ENCODE measurements at regions of chr22 and their contacts with region 1.

Region 1: GRCh38 chr22:46563381-46564083 is 26.1 kb upstream of the CELSR1 start:
- DNase-seq: peak; percentile 85
- H3K4me3 ChIP-seq: no peak overlapping the region; a peak in 1 of 4 replicates
- H3K27ac ChIP-seq: 0 out of 4 replicates have a peak overlapping the region, but pooled peaks of 1 of the 2 experiments have one; percentile 8
- H3K4me1 ChIP-seq: peaks cover 0 to 12% of the 10 kb centered on the region in 2 experiments; a peak in 1 of 4 replicates
- H3K27me3 ChIP-seq: no peaks in the 10 kb centered on the region
- CTCF ChIP-seq: peak; percentile 70
- EP300 ChIP-seq: no peak
- RAD21 ChIP-seq: peak; percentile 84

Region 2: GRCh38 chr22:46346680-46347405 is 216.7 kb before region 1 on chr22:
- CTCF ChIA-PET with region 1: no interaction called
- POLR2A ChIA-PET with region 1: no interaction called
- DNase-seq: no peak
- H3K4me3 ChIP-seq: no peak overlapping the region
- H3K27ac ChIP-seq: no peak overlapping the region
- H3K4me1 ChIP-seq: no peaks in the 10 kb centered on the region
- H3K27me3 ChIP-seq: no peaks in the 10 kb centered on the region
- CTCF ChIP-seq: no peak
- EP300 ChIP-seq: no peak
- RAD21 ChIP-seq: no peak

Region 3: GRCh38 chr22:46547883-46548244 is 15.7 kb before region 1 on chr22:
- CTCF ChIA-PET with region 1: interaction called, 48 read pairs
- POLR2A ChIA-PET with region 1: no interaction called
- DNase-seq: no peak
- H3K4me3 ChIP-seq: no peak overlapping the region
- H3K27ac ChIP-seq: peak overlapping the region; percentile 76 to 79; a peak in 3 of 4 replicates
- H3K4me1 ChIP-seq: peaks cover 16 to 28% of the 10 kb centered on the region in 2 experiments; a peak in 3 of 4 replicates
- H3K27me3 ChIP-seq: no peaks in the 10 kb centered on the region
- CTCF ChIP-seq: no peak
- EP300 ChIP-seq: no peak
- RAD21 ChIP-seq: no peak

Region 4: DNA sequence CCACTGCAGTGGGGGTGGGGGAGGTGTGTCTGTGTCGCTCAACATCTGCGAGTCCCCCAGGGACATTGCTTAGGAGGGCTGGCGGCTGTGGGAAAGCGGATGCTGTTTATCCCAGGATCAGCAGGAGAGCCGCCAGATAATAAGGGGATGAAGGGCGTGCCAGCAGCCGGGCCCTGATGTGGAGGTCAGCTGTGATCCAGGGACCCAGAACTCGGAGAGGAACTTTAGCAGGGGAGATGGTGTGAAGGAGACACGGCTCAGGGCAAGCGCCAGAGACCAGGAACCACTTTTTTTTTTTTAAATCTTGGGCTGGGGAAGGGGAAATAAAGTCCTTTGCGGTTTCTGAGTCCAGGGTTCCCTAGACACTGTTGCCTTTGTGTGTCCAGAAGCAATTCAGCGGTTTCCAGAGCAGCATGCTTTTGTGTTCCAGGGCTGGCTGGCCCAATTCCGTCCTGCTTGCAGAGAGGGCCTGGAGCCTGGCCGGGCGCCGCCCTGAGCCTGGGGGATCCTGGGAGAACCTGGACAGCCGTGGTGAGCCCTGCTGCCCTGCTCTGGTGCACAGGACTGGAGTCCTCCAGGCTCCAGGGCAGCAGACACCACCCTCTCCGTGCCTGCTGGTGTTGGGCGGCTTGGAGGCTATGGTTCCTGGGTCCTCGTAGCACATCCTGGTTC is 56.4 kb after region 1 on chr22 and contains the start of gene GRAMD4:
- CTCF ChIA-PET with region 1: interaction called, 28 read pairs
- POLR2A ChIA-PET with region 1: interaction called, 3 read pairs
- DNase-seq: peak; percentile 95
- H3K4me3 ChIP-seq: no peak within 1 kb of the TSS
- H3K27ac ChIP-seq: peak within 1 kb of the TSS in 1 of 2 experiments; percentile 96; a peak in 2 of 4 replicates
- H3K4me1 ChIP-seq: peaks cover 0 to 54% of the 10 kb centered on the region in 2 experiments; a peak in 1 of 4 replicates
- H3K27me3 ChIP-seq: no peaks in the 10 kb centered on the region
- CTCF ChIP-seq: no peak
- EP300 ChIP-seq: peak in 1 of 2 experiments; percentile 83; a peak in 2 of 4 replicates
- RAD21 ChIP-seq: no peak
- polyA plus RNA-seq, gene GRAMD4: 13.5 and 15.5 TPM in 2 replicates

Region 5: DNA sequence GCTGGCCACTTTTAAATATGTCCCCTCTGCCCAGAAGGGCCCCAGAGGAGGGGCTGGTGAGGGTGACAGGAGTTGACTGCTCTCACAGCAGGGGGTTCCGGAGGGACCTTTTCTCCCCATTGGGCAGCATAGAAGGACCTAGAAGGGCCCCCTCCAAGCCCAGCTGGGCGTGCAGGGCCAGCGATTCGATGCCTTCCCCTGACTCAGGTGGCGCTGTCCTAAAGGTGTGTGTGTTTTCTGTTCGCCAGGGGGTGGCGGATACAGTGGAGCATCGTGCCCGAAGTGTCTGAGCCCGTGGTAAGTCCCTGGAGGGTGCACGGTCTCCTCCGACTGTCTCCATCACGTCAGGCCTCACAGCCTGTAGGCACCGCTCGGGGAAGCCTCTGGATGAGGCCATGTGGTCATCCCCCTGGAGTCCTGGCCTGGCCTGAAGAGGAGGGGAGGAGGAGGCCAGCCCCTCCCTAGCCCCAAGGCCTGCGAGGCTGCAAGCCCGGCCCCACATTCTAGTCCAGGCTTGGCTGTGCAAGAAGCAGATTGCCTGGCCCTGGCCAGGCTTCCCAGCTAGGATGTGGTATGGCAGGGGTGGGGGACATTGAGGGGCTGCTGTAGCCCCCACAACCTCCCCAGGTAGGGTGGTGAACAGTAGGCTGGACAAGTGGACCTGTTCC is 103.2 kb after region 1 on chr22:
- CTCF ChIA-PET with region 1: interaction called, 76 read pairs
- POLR2A ChIA-PET with region 1: interaction called, 3 read pairs
- DNase-seq: no peak
- H3K4me3 ChIP-seq: no peak overlapping the region
- H3K27ac ChIP-seq: no peak overlapping the region
- H3K4me1 ChIP-seq: peaks cover 0 to 22% of the 10 kb centered on the region in 2 experiments; a peak in 2 of 4 replicates
- H3K27me3 ChIP-seq: no peaks in the 10 kb centered on the region
- CTCF ChIP-seq: no peak
- EP300 ChIP-seq: no peak
- RAD21 ChIP-seq: no peak

Region 6: GRCh38 chr22:46701262-46701661 is 137.7 kb after region 1 on chr22:
- CTCF ChIA-PET with region 1: interaction called, 11 read pairs
- POLR2A ChIA-PET with region 1: no interaction called
- DNase-seq: peak; percentile 17
- H3K4me3 ChIP-seq: no peak overlapping the region
- H3K27ac ChIP-seq: no peak overlapping the region
- H3K4me1 ChIP-seq: no peaks in the 10 kb centered on the region
- H3K27me3 ChIP-seq: no peaks in the 10 kb centered on the region
- CTCF ChIP-seq: no peak
- EP300 ChIP-seq: no peak
- RAD21 ChIP-seq: no peak

Region 7: DNA sequence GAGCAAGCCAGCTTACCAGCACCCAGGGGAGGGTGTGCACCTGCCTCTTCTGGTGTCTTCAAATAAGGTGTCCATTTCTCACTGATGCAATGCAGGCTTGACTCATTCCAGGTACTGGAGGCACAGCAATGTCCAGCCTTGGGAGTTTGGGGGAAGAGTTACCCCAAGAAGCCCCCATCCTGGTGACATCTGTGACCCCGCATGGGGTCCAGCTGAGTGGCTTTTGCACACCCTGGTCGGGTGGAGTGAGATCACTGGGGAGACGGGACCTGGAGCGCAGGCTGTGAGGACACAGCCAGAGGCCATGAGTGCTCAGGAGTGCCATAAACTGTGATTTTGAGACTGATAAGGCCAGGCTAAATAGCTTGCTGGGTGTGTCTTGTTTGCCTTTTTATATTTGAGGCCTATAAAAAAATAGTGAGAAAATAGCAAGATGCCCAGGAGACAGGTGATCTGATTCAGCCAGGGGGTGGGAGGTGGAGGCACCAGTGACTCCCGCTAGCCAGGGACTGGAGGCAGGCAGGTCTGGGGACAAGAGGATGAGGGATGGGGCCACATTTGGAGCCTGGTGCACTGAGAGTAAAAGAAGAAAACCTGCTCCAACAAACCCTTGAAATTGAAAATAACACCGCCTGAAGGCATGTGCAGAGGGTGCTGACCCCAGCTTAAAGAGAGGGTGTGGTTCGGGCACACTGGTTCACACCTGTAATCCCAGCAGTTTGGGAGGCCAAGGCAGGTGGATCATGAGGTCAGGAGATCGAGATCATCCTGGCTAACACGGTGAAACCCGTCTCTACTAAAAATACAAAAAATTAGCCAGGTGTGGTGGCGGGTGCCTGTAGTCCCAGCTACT is 179.4 kb after region 1 on chr22:
- CTCF ChIA-PET with region 1: interaction called, 17 read pairs
- POLR2A ChIA-PET with region 1: no interaction called
- DNase-seq: no peak
- H3K4me3 ChIP-seq: no peak overlapping the region
- H3K27ac ChIP-seq: no peak overlapping the region; a peak in 1 of 4 replicates
- H3K4me1 ChIP-seq: peaks cover 7 to 39% of the 10 kb centered on the region in 2 experiments; a peak in 1 of 4 replicates
- H3K27me3 ChIP-seq: no peaks in the 10 kb centered on the region
- CTCF ChIP-seq: no peak
- EP300 ChIP-seq: no peak
- RAD21 ChIP-seq: no peak